ENCODE measurements at regions of chr2 and their contacts with region 1.

Region 1: GRCh38 chr2:219057709-219058540 is 2.8 kb downstream of the IHH start:
- DNase-seq: peak; percentile 68 to 85 (median 81)
- H3K4me3 ChIP-seq: peak overlapping the region in 1 of 4 donors; percentile 12
- H3K27ac ChIP-seq: no peak overlapping the region
- H3K4me1 ChIP-seq: peaks cover 20 to 36% of the 10 kb centered on the region in 2 donors
- H3K27me3 ChIP-seq: peaks cover 62% of the 10 kb centered on the region
- CTCF ChIP-seq: peak; percentile 85 to 97 (median 90)
- POLR2A ChIP-seq: no peak

Region 2: DNA sequence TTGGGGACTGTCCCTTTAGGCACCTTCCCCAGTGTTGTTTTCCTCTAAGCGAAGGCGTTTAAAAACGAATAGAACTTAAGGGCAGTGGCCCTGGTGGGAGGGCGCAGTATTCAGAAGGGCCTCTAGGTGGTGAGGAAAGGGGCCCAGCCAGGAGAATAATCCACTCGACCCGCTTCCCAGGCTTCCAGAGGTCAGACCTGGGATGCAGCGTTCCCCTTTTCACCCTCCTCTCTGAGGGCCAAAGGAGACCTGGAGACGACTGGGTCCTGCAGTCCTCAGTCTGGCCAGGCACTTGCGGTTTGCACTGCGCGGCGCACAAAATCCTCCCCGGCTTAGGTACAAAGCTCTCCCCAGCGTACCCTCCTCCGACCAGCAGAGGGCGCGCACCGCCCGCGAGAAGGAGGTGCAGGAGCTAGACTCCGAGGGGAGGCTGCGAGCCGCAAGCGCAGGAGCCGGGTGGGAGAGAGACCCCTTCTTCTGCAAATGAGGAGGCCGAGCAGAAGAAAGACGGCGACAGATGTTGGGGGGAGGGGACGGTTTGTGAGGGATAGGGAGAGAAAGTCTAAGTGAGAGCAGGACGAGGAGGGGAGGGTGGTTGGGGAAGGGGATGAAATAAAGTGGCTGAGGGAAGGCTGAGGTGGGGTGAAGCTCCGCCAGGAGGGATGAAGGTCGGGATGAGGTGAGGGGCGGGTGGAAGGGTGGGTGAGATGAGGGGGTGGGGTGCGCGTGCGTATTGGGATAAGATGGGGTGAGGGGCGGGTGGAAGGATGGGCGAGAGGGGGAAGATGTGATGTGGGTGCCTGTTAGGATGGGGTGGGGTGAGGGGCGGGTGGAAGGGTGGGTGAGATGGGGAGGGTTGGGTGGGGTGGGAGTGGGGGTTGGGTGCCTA is 77.8 kb before region 1 on chr2:
- intact Hi-C with region 1: no loop called
- DNase-seq: peak; percentile 79 to 93 (median 86)
- H3K4me3 ChIP-seq: no peak overlapping the region
- H3K27ac ChIP-seq: no peak overlapping the region
- H3K4me1 ChIP-seq: peaks cover 16% of the 10 kb centered on the region in 2 donors
- H3K27me3 ChIP-seq: peaks cover 56% of the 10 kb centered on the region
- CTCF ChIP-seq: peak; percentile 82 to 96 (median 89)
- POLR2A ChIP-seq: no peak

Region 3: GRCh38 chr2:219125225-219125885 is 67.4 kb after region 1 on chr2:
- intact Hi-C with region 1: no loop called
- DNase-seq: peak; percentile 87 to 95 (median 94)
- H3K4me3 ChIP-seq: no peak overlapping the region
- H3K27ac ChIP-seq: peak overlapping the region; percentile 73 to 93 (median 81)
- H3K4me1 ChIP-seq: peaks cover 15 to 38% of the 10 kb centered on the region in 2 donors
- H3K27me3 ChIP-seq: no peaks in the 10 kb centered on the region
- CTCF ChIP-seq: no peak
- POLR2A ChIP-seq: peak in 1 of 2 donors; percentile 65

Region 4: DNA sequence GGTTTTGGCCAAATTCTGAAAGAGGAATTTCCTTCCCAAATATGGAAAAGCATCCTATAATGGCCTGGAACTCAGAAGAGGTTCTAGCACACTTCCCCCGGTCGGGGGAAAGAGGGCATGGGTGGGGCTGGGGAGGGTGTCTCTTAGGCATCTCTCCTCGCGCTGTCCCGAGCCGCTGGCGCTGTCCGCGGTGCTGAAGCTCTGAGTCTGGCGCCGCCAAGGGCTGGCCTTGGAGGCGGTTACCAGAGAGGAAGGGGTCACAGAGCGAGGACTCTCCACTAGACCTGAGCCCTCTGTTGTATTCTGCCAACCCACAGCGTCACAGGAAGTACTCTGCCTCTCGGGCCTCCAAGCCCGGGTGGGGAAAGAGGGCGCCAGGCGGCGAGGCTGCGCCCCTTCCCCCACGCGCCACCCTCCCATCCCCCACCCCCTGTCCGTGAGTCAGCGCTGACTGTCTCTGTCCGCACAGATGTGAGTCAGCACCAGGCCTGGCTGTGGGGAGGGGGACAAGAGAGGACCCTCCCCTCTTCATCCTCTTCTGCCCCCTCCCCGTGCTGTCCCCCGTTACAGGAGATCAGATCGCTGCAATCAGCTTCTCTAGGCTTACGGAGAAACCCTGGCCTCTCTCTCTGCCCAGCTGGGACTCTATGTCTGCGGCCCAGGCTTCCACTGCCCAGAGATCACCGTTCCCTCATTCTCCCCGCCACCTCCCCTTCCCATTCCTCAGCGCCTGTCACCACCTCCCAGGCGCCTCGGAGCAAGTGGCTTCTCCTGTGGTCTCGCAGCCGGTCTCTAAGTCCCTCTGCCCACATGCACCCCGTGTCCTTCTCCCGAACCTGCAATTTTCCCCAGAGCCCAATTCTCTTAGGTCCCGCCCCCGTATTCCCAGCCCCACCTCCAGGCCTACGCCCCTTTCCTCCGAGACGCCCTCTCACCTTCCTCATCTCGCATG is 250.5 kb after region 1 on chr2:
- intact Hi-C with region 1: loop called in 1 of 2 experiments (anchors 10 kb)
- DNase-seq: peak; percentile 56 to 79 (median 77)
- H3K4me3 ChIP-seq: peak overlapping the region in 1 of 4 donors; percentile 36
- H3K27ac ChIP-seq: peak overlapping the region in 1 of 5 donors; percentile 74
- H3K4me1 ChIP-seq: no peaks in the 10 kb centered on the region
- H3K27me3 ChIP-seq: peaks cover 12% of the 10 kb centered on the region
- CTCF ChIP-seq: no peak
- POLR2A ChIP-seq: peak in 1 of 2 donors; percentile 28